ENCODE measurements at regions of chr2 and their contacts with region 1.

Region 1: GRCh38 chr2:134118279-134119116 is 135.4 kb upstream of the MGAT5 start:
- DNase-seq: peak; percentile 63 to 98 (median 80)
- ATAC-seq: peak; percentile 61
- H3K4me3 ChIP-seq: no peak overlapping the region
- H3K4me1 ChIP-seq: peaks cover 31% of the 10 kb centered on the region
- CTCF ChIP-seq: peak; percentile 54

Region 2: GRCh38 chr2:133791191-133791590 is 327.3 kb before region 1 on chr2:
- intact Hi-C with region 1: no loop called
- DNase-seq: no peak
- ATAC-seq: no peak
- H3K4me3 ChIP-seq: no peak overlapping the region
- H3K4me1 ChIP-seq: no peaks in the 10 kb centered on the region
- CTCF ChIP-seq: no peak

Region 3: DNA sequence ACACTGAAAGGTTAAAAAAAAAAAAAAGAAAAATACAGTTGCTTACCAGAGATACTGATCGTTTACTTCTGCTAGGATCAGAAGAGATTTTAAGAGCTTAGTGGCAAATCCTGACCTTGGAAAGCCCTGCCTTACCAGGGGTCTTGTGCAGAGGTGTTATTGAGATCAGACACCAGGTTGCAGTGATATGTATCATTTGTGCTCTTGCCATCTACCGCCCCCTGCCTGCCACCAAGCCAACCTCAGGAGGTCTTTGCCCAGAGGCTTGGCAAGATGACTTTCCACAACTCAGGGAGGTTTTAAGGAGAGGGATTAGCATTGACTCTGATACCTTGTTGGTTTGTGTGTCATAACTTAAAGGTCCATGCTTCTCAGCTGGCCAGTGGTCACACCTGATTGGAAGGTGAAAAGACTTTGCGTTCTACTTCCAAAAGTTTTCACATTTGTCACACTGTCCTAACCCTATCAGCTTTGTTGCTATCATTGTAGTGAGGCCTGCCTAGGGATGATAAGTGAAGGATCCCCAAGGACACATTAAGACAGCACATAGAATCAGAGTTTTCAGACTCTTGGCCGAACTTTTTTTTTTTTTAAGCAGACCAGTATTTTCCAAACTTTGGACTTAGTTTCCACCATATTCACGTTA is 89.2 kb after region 1 on chr2:
- intact Hi-C with region 1: loop called in 1 of 2 experiments (anchors 5 kb)
- DNase-seq: peak; percentile 63 to 86 (median 83)
- ATAC-seq: peak; percentile 91
- H3K4me3 ChIP-seq: no peak overlapping the region
- H3K4me1 ChIP-seq: peaks cover 6% of the 10 kb centered on the region
- CTCF ChIP-seq: peak; percentile 56

Region 4: GRCh38 chr2:134258684-134259388 is 140.3 kb after region 1 on chr2:
- intact Hi-C with region 1: loop called in 1 of 2 experiments (anchors 10 kb)
- DNase-seq: peak in 1 of 3 donors; percentile 32
- ATAC-seq: peak; percentile 50
- H3K4me3 ChIP-seq: no peak overlapping the region
- H3K4me1 ChIP-seq: peaks cover 25% of the 10 kb centered on the region
- CTCF ChIP-seq: no peak

Region 5: DNA sequence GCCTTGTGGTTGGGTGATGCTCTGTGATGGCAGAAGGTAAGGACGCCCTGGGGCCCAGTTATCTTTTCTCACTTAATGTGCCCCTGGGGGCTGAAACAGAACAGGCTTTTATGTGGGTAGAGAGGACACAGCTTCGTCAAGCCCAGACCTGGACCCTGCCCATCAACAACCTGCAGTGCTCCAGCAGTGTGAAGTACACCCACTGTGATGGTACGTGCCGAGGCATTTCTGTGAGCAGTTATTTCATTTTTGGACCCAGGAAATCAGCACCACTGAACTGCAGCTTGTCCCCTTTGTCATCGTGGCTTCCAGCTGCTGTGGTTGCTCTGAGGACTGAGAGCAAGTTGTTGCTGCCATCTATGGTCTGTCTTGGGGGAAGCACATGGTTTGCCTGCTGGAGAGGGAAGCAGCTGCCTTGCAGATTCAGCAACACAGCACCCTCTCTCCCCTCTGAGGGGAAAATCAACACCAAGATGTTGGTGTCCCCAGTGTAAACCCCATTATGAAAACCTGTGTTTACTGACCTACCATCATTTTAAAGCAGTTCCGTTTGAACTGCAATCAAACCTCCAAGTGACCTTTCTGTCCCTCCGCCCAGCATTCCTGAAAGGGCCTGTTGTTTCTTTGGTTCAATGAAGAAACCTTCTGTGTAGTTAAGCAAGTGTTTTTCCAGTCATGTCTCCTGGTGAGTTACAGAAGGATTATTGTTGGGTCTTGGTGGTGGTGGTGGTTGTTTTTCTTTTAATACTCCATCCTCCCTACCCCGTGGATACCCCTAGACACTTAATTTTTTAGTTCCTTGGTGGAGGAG is 293.5 kb after region 1 on chr2:
- intact Hi-C with region 1: loop called (anchors 5 kb)
- DNase-seq: peak; percentile 63 to 79 (median 66)
- ATAC-seq: peak; percentile 90
- H3K4me3 ChIP-seq: no peak overlapping the region
- H3K4me1 ChIP-seq: peaks cover 15% of the 10 kb centered on the region
- CTCF ChIP-seq: peak; percentile 37